Activated CD8-positive, alpha-beta T cell treated with anti-CD3 and anti-CD28 coated beads, Interleukin-2, amount 10 ng/mL, durations not matched to agents 7 days and 5 days (primary cell): ENCODE measurements at regions of chr2 and their contacts with region 1.

Region 1: DNA sequence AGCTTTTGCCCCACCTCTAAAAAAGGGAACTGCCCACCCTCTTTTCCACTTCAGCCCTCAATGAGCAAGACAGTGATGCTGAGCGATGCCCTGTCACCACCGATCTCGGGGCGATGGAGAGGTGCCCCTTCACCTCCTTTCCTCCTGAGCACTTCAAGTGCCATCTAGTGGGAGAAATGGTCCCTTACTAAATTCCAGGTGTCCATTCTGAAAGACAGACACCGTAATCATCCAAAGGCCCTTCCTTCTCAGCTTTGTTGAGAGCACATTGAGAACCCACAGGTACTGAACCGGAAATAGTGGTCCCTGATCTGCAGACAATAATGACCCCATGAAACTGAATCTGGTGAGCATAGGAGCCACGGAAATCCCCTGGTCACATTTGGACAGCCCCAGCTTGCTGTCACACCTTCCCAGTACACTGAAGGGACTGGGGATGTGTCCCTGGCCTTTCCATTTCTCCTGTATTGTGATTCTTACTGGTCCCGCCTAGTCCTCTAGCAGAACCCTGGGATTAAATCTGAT is 38.5 kb downstream of the KCTD18 start:
- DNase-seq: peak; percentile 50
- ATAC-seq: no peak
- H3K4me3 Mint-ChIP-seq: no peak overlapping the region
- H3K27ac Mint-ChIP-seq: peak overlapping the region; percentile 47
- H3K4me1 Mint-ChIP-seq: peaks cover 35% of the 10 kb centered on the region
- H3K27me3 Mint-ChIP-seq: no peaks in the 10 kb centered on the region

Region 2: DNA sequence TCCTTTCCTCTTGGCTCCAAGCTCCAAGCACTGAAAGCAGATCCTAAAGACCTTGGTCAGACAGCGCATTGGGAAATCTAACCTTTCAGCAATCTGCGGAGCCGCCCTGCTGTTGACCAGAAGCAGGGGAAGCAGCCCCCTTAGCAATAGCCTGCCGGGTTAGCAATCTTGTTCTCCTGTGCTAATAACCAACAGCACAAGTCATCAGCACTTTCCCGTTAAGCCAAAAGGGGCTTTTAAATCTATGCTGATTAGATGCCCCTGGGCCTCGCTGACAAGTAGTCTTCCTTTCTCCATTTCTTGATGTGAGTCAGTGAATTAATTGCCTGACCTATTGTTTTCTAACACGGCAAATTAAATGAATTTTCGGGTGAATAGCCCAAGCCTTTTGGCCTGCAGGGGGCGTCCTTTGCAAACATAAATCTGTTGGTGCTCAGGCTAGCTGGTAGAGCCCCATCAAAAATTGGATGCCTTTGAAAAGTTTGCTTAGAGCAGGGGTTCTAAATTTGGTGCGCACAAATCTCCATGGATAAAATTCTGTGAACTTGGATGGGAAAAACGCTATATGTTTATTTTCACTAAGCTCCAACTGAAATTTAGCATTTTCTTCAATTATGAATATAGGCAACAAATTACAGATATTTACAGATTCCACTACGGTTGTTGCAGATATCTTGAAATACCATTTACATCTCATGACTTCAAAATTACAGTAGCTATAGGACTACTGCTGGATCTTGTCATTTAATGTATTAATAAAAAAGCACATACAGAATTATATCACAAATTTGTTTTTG is 491.4 kb before region 1 on chr2:
- CTCF ChIA-PET with region 1: interaction called, 33 read pairs
- POLR2A ChIA-PET with region 1: interaction called, 4 read pairs
- DNase-seq: peak; percentile 86
- ATAC-seq: peak; percentile 65
- H3K4me3 Mint-ChIP-seq: no peak overlapping the region
- H3K27ac Mint-ChIP-seq: no peak overlapping the region
- H3K4me1 Mint-ChIP-seq: peaks cover 21% of the 10 kb centered on the region
- H3K27me3 Mint-ChIP-seq: no peaks in the 10 kb centered on the region

Region 3: GRCh38 chr2:199985625-199986207 is 485.7 kb before region 1 on chr2:
- CTCF ChIA-PET with region 1: interaction called, 33 read pairs
- POLR2A ChIA-PET with region 1: no interaction called
- DNase-seq: peak; percentile 78
- ATAC-seq: peak; percentile 85
- H3K4me3 Mint-ChIP-seq: no peak overlapping the region
- H3K27ac Mint-ChIP-seq: peak overlapping the region; percentile 32
- H3K4me1 Mint-ChIP-seq: peaks cover 5% of the 10 kb centered on the region
- H3K27me3 Mint-ChIP-seq: no peaks in the 10 kb centered on the region

Region 4: GRCh38 chr2:200373973-200374416 is 97.4 kb before region 1 on chr2:
- CTCF ChIA-PET with region 1: interaction called, 13 read pairs
- POLR2A ChIA-PET with region 1: interaction called, 12 read pairs
- DNase-seq: peak; percentile 73
- ATAC-seq: peak; percentile 94
- H3K4me3 Mint-ChIP-seq: peak overlapping the region; percentile 84
- H3K27ac Mint-ChIP-seq: peak overlapping the region; percentile 95
- H3K4me1 Mint-ChIP-seq: peaks cover 55% of the 10 kb centered on the region
- H3K27me3 Mint-ChIP-seq: no peaks in the 10 kb centered on the region

Region 5: DNA sequence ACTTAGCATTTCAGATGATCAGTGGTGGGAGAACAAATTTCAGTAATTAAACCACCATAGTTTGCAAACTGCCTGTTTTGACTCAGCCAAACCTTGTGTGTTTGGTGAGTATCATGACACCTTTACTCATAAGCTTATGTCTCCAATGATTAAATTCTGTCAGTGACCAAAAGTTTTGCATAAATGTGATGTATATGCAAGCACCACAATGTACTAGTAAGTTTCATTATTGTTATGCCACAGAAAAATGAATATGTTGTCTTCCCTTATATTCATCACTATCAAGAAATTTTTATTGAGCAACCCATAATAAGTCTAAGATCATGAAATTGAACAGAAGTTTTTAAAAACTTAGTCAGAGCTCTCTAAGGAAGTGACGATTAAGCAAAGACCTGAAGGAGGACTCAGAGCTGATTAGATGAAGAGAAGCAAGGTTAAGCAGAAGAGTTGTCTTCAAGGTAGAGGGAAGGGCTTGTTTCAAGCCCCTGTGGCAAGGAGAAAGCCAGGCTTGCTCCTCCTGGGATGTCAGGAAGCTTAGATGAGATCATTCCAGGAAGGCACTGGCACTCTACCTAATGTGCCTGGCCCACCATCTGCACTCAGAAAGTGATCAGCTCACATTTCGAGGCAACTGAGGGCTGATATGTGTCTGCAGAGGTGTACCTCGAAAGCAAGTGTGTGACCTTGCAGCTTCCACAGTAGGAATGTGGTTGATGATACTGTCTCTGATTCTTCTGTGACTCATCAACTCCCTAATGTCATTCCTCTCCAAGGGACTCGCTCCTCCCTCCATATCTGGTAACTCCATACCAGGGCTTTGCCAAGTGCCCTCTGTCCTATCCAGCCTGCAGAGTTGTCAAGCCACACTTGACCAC is 16.2 kb before region 1 on chr2:
- CTCF ChIA-PET with region 1: interaction called, 22 read pairs
- POLR2A ChIA-PET with region 1: interaction called, 3 read pairs
- DNase-seq: no peak
- ATAC-seq: no peak
- H3K4me3 Mint-ChIP-seq: no peak overlapping the region
- H3K27ac Mint-ChIP-seq: no peak overlapping the region
- H3K4me1 Mint-ChIP-seq: peaks cover 3% of the 10 kb centered on the region
- H3K27me3 Mint-ChIP-seq: no peaks in the 10 kb centered on the region